GM12878 (cell line): ENCODE measurements at regions of chr7 and their contacts with region 1.

Region 1: DNA sequence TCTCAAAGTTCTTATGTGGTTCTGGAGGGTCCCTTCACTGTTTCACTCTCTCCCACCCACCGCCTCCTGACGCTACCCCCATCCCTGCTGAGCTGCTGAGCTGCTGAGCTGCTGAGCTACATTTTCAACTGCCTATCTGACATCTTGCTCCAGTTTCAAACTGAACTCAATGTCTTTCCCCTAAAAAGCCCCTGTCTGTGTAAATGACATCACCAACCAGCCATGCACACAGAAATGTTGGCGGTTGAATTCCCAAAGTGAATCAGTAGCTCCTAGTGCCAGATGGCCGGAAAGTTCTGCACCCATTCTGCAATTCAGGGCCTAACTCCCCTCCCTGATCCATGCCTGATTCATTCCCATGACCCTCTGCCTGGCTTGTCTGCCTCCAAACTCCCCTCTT is 71.2 kb downstream of the WNT2 start:
- DNase-seq: peak; percentile 35
- ATAC-seq: peak; percentile 84
- H3K4me3 ChIP-seq: no peak overlapping the region
- H3K27ac ChIP-seq: no peak overlapping the region
- H3K4me1 ChIP-seq: peaks cover 4% of the 10 kb centered on the region
- H3K27me3 ChIP-seq: no peaks in the 10 kb centered on the region
- CTCF ChIP-seq: no peak
- EP300 ChIP-seq: peak in 1 of 2 experiments; percentile 49; a peak in 1 of 4 replicates
- POLR2A ChIP-seq: no peak
- RAD21 ChIP-seq: no peak

Region 2: GRCh38 chr7:117219485-117219884 is 32.2 kb before region 1 on chr7:
- CTCF ChIA-PET with region 1: no interaction called
- POLR2A ChIA-PET with region 1: no interaction called
- RAD21 ChIA-PET with region 1: interaction called, 3 read pairs
- SMC1A ChIA-PET with region 1: interaction called, 6 read pairs
- in situ Hi-C with region 1: no loop called
- intact Hi-C with region 1: loop called (anchors 5 kb)
- DNase-seq: no peak
- ATAC-seq: peak; percentile 75
- H3K4me3 ChIP-seq: no peak overlapping the region
- H3K27ac ChIP-seq: no peak overlapping the region; the same call in 1 of the 2 replicates
- H3K4me1 ChIP-seq: no peaks in the 10 kb centered on the region; the same call in 1 of the 2 replicates
- H3K27me3 ChIP-seq: no peaks in the 10 kb centered on the region
- CTCF ChIP-seq: no peak
- EP300 ChIP-seq: no peak
- POLR2A ChIP-seq: no peak
- RAD21 ChIP-seq: no peak

Region 3: DNA sequence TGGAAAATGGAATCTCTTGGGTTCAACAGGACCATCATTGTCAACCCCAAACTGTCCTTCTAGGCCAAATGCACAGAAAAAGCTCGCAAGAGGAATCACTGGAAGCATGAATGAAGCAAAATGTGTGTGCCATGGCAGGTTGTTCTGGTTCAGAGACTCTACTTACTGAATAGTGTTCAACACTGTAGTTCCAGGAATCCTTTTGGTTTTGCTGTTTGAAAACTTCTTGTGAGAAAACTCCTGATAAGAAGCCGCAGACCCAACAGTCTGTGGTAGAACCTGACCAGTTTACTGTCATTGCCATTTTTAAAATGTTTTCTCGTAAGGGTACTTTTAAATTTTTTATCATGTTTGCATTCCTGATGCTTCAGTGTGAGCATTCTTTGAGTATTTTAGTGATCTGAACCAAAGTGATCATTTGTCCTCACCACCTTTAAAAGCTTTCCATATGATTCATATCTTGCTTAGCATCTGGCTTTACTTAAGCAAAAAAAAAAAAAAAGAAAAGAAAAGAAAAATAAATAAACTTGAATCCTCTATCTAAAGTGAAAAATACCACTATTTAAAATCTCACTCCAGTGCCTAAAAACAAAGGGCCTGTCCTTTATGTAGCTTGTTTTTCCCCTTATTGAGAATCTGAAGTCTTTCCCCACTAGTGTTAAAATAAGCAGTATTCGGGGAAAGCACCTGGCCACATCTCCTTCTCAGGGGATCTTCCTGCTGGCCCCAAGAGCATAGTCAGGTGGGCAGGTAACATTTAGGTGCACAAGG is 21.2 kb before region 1 on chr7:
- CTCF ChIA-PET with region 1: interaction called, 7 read pairs
- POLR2A ChIA-PET with region 1: interaction called, 9 read pairs
- RAD21 ChIA-PET with region 1: interaction called, 47 read pairs
- SMC1A ChIA-PET with region 1: interaction called, 39 read pairs
- in situ Hi-C with region 1: no loop called
- intact Hi-C with region 1: no loop called
- DNase-seq: peak; percentile 66
- ATAC-seq: peak; percentile 92
- H3K4me3 ChIP-seq: no peak overlapping the region
- H3K27ac ChIP-seq: peak overlapping the region; percentile 74
- H3K4me1 ChIP-seq: peaks cover 12% of the 10 kb centered on the region
- H3K27me3 ChIP-seq: no peaks in the 10 kb centered on the region
- CTCF ChIP-seq: no peak
- EP300 ChIP-seq: peak; percentile 25 to 64; a peak in 1 of 4 replicates
- POLR2A ChIP-seq: no peak
- RAD21 ChIP-seq: no peak

Region 4: GRCh38 chr7:117237646-117238045 is 14.0 kb before region 1 on chr7:
- CTCF ChIA-PET with region 1: interaction called, 3 read pairs
- POLR2A ChIA-PET with region 1: interaction called, 15 read pairs
- RAD21 ChIA-PET with region 1: interaction called, 29 read pairs
- SMC1A ChIA-PET with region 1: interaction called, 21 read pairs
- in situ Hi-C with region 1: no loop called
- intact Hi-C with region 1: no loop called
- DNase-seq: peak; percentile 28
- ATAC-seq: peak; percentile 83
- H3K4me3 ChIP-seq: no peak overlapping the region
- H3K27ac ChIP-seq: no peak overlapping the region
- H3K4me1 ChIP-seq: peaks cover 12% of the 10 kb centered on the region
- H3K27me3 ChIP-seq: no peaks in the 10 kb centered on the region
- CTCF ChIP-seq: no peak
- EP300 ChIP-seq: 0 out of 4 replicates have a peak, but pooled peaks of 1 of the 2 experiments have one; percentile 19
- POLR2A ChIP-seq: no peak
- RAD21 ChIP-seq: no peak